Head of caudate nucleus (tissue), 42 donors: ENCODE measurements at regions of chr16 and their contacts with region 1.

Region 1: DNA sequence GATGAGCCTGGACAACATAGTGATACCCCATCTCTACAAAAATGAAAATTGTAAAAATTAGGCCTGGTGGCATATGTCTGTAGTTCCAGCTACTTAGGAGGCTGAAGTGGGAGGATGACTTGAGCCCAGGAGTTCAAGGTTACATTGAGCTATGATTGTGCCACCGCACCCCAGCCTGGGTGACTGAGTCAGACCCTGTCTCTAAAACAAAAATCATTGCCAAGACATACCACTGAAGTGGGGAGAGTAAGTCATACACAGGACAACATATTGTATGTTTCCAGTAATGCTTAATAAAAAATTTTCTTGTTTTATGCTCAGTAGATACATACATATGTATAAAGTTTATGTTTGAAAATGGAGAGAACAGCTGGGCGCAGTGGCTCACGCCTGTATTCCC is 39.2 kb downstream of the NDE1 start:
- DNase-seq: no peak

Region 2: GRCh38 chr16:15440852-15441251 is 248.4 kb before region 1 on chr16:
- intact Hi-C with region 1: no loop called
- DNase-seq: no peak

Region 3: GRCh38 chr16:15618392-15618791 is 70.9 kb before region 1 on chr16:
- intact Hi-C with region 1: no loop called
- DNase-seq: no peak

Region 4: DNA sequence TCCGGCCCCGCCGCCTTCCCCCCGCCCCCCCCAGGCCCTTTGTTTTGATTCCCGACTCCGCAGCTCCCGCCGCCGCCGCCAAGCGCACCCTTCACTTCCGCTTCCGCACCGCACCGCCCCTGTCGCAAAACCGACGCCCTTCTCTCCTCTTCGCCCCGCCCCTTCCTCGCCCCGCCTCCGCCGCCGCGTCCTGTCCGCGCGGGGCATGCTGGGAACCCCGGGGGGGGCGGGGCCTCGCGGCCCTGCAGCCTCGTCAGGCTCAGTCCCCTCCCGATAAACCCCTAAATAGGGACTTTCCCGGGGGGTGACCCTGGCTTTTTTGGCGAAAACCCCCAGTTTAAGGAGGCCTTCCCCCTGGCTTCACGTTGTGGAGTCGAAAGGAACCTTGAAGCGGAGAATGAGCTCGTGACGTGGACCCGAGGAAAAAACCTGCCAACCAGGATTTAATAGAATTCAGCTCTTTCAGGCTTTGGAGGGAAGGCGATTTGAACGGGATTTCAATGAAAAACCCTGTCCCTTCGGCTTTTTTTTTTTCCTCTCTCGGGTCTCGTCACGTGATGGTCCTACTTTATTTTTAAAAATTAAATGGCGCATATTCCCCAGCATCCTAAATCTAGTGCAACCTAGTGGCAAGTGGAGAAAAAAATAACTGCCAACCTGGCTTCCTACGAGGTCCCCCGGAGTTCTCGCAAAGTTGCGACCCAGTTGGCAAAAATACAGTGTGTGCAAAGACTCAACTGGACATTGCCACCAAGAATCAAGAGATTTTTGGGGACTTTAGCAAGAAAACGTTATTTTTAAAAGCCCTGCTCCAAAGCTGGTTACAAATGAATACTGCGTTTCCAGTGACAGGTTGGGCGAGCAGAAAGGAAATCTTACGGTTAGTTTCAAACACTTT is 46.0 kb before region 1 on chr16 and contains the start of gene MARF1:
- intact Hi-C with region 1: loop called (anchors 5 kb)
- DNase-seq: peak; percentile 90 to 100 (median 98)

Region 5: DNA sequence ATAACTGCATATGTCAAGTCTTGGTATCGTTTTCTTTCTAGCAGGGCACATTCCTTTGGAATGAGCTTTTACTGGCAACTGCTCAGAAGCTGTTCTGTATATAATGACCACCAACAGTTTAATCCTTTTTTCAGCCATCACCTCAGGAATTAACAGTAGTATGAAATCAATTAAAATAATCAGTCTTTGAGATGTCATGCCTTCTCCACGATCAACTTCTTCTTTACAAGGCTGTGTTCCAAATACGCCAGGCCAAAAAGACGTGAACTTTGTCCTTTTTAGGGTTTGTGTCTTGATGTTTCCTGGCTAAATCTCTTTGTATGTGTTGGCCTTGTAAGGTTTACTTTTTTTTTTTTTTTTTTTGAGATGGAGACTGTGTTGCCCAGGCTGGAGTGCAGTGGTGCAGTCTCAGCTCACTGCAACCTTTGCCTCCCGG is 315.0 kb after region 1 on chr16:
- intact Hi-C with region 1: no loop called
- DNase-seq: no peak